Brain microvascular endothelial cell (primary cell): ENCODE measurements at regions of chr9 and their contacts with region 1.

Region 1: GRCh38 chr9:134449221-134449894 is 123.1 kb downstream of the RXRA start:
- DNase-seq: peak; percentile 92
- H3K4me3 ChIP-seq: no peak overlapping the region
- H3K27ac ChIP-seq: no peak overlapping the region
- H3K27me3 ChIP-seq: no peaks in the 10 kb centered on the region
- CTCF ChIP-seq: peak; percentile 94

Region 2: DNA sequence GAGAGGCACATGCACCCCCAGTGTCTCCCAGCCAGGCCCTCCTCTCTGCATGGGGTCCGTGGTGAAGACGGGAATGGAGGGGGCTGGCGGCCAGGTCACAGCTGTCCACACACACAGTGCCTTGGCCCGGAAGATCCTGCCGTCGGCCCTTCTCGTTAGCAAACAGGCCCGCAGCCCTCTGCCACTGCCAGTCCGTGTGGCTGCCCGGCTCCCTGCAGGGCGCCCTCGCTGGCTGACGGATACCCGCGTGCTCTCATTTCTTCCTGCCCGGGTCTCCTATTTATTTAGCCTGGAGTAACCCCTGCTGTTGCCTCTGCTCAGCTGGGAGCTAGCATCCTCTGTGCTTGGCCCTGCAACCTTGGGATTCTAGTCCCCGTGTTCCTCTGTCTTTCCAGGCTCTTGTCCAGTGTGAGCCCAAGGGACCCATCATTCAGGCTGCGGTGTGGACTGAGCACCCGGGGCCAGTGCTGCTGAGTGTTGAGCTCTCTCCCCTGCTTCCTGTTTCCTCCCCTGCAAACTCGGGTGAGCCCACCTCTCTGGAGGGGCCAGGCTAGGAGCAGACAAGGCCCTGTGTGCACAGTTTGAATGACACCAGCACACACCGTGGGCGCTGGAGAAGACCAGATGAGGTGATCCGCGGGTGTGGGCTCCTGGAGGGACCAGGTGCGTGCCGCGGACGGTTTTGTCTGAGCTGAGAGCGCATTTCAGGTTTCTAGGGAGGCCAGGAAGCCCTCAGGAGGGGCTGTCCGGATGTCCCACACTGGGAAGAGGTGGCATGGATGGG is 270.4 kb before region 1 on chr9:
- in situ Hi-C with region 1: loop called (anchors 10 kb)
- DNase-seq: no peak
- H3K4me3 ChIP-seq: no peak overlapping the region
- H3K27ac ChIP-seq: no peak overlapping the region
- H3K27me3 ChIP-seq: peaks cover 22% of the 10 kb centered on the region
- CTCF ChIP-seq: no peak